ENCODE measurements at regions of chr10 and their contacts with region 1.

Region 1: GRCh38 chr10:73644015-73644743 is 2.9 kb upstream of the MYOZ1 start:
- DNase-seq: peak in 1 of 2 donors; percentile 82
- ATAC-seq: peak; percentile 62 to 84 (median 84)
- H3K4me3 ChIP-seq: no peak overlapping the region
- H3K4me3 Mint-ChIP-seq: peak overlapping the region; percentile 55
- H3K27ac ChIP-seq: no peak overlapping the region
- H3K27ac Mint-ChIP-seq: peak overlapping the region in 1 of 2 donors; percentile 2
- H3K4me1 ChIP-seq: peaks cover 14% of the 10 kb centered on the region
- H3K4me1 Mint-ChIP-seq: peaks cover 0 to 15% of the 10 kb centered on the region in 2 donors
- H3K27me3 ChIP-seq: no peaks in the 10 kb centered on the region
- H3K27me3 Mint-ChIP-seq: peaks cover 0 to 3% of the 10 kb centered on the region in 2 donors
- CTCF ChIP-seq: peak; percentile 85

Region 2: GRCh38 chr10:73252445-73253224 is 391.5 kb before region 1 on chr10 and contains the start of gene MRPS16:
- intact Hi-C with region 1: no loop called
- DNase-seq: peak; percentile 90 to 97
- ATAC-seq: peak; percentile 89 to 98 (median 93)
- H3K4me3 ChIP-seq: peak within 1 kb of the TSS; percentile 70
- H3K4me3 Mint-ChIP-seq: peak within 1 kb of the TSS; percentile 97
- H3K27ac ChIP-seq: peak within 1 kb of the TSS; percentile 86
- H3K27ac Mint-ChIP-seq: peak within 1 kb of the TSS; percentile 95 to 97
- H3K4me1 ChIP-seq: peaks cover 18% of the 10 kb centered on the region
- H3K4me1 Mint-ChIP-seq: peaks cover 27 to 36% of the 10 kb centered on the region in 2 donors
- H3K27me3 ChIP-seq: no peaks in the 10 kb centered on the region
- H3K27me3 Mint-ChIP-seq: no peaks in the 10 kb centered on the region
- CTCF ChIP-seq: no peak
- total RNA-seq, gene MRPS16: 28.2 to 39.4 (median 31.4) TPM

Region 3: DNA sequence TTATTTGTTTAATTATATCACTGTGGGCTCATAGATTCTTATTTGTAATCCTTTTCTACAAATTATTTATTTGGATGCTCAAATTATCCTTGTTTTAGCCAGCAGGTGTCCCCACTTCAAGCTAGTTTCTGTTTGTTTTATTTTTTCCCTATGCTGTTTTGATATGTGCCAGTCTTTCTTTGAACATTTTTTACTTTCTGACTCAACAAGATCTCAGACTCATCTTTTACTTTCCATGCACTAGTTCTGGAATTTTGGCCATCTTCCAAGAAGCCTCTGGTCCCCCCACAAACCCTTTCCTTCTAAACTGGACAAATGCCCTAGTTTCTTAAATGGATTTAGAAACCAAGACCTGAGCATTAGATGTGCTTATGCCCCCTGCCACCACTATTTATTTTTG is 380.2 kb before region 1 on chr10:
- intact Hi-C with region 1: loop called (anchors 1 kb)
- DNase-seq: peak in 1 of 2 donors; percentile 29
- ATAC-seq: no peak
- H3K4me3 ChIP-seq: no peak overlapping the region
- H3K4me3 Mint-ChIP-seq: no peak overlapping the region
- H3K27ac ChIP-seq: no peak overlapping the region
- H3K27ac Mint-ChIP-seq: no peak overlapping the region
- H3K4me1 ChIP-seq: no peaks in the 10 kb centered on the region
- H3K4me1 Mint-ChIP-seq: no peaks in the 10 kb centered on the region
- H3K27me3 ChIP-seq: no peaks in the 10 kb centered on the region
- H3K27me3 Mint-ChIP-seq: peaks cover 0 to 13% of the 10 kb centered on the region in 2 donors
- CTCF ChIP-seq: peak; percentile 34

Region 4: GRCh38 chr10:73529089-73529832 is 114.9 kb before region 1 on chr10:
- intact Hi-C with region 1: loop called (anchors 1 kb)
- DNase-seq: peak; percentile 20 to 83
- ATAC-seq: peak; percentile 81 to 96 (median 96)
- H3K4me3 ChIP-seq: no peak overlapping the region
- H3K4me3 Mint-ChIP-seq: no peak overlapping the region
- H3K27ac ChIP-seq: no peak overlapping the region
- H3K27ac Mint-ChIP-seq: no peak overlapping the region
- H3K4me1 ChIP-seq: no peaks in the 10 kb centered on the region
- H3K4me1 Mint-ChIP-seq: no peaks in the 10 kb centered on the region
- H3K27me3 ChIP-seq: no peaks in the 10 kb centered on the region
- H3K27me3 Mint-ChIP-seq: no peaks in the 10 kb centered on the region
- CTCF ChIP-seq: peak; percentile 79

Region 5: DNA sequence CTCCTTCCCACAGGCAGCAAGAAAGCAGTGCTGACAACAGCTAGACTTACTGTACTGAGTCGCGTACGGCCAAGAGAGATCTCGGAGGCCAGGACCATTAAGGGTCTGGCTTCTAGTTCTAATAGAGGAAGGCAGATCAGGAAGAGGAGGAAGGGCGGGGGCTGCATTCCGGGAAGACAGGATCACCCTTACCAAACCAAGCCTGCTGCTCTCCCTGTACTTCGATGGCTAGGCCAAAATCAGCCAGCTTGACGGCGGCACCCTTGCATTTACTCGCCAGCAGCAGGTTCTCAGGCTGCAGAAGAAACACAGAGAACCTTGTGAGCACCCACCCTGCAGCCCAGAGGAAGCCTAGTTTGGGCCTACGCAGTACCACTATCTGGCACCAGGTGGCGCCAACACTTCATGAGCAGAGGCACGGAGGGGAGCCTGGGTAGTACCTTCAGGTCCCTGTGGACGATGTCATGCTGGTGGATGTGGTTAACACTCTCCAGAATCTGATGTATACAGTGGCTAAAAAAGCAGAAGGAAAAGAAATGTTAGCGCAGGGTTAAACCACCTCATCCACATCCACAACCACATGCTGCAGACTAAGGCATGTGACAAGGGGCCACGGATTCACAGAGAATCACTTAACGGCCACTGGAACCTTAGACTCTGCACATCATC is 204.8 kb after region 1 on chr10:
- intact Hi-C with region 1: no loop called
- DNase-seq: peak; percentile 94 to 96
- ATAC-seq: peak; percentile 98 to 99 (median 99)
- H3K4me3 ChIP-seq: no peak overlapping the region
- H3K4me3 Mint-ChIP-seq: peak overlapping the region; percentile 79
- H3K27ac ChIP-seq: peak overlapping the region; percentile 27
- H3K27ac Mint-ChIP-seq: peak overlapping the region; percentile 75 to 87
- H3K4me1 ChIP-seq: peaks cover 18% of the 10 kb centered on the region
- H3K4me1 Mint-ChIP-seq: peaks cover 16 to 22% of the 10 kb centered on the region in 2 donors
- H3K27me3 ChIP-seq: no peaks in the 10 kb centered on the region
- H3K27me3 Mint-ChIP-seq: no peaks in the 10 kb centered on the region
- CTCF ChIP-seq: peak; percentile 97